Activated CD8-positive, alpha-beta memory T cell treated with anti-CD3 and anti-CD28 coated beads, Interleukin-2, amount 10 ng/mL, durations not matched to agents 7 days and 5 days (primary cell): ENCODE measurements at regions of chr11 and their contacts with region 1.

Region 1: GRCh38 chr11:32176223-32176934 is 85.5 kb downstream of the RCN1 start:
- DNase-seq: peak; percentile 84
- ATAC-seq: peak; percentile 68
- H3K4me3 Mint-ChIP-seq: no peak overlapping the region
- H3K27ac Mint-ChIP-seq: no peak overlapping the region
- H3K4me1 Mint-ChIP-seq: no peaks in the 10 kb centered on the region
- H3K27me3 Mint-ChIP-seq: peaks cover 19% of the 10 kb centered on the region

Region 2: GRCh38 chr11:32052218-32052617 is 124.2 kb before region 1 on chr11:
- CTCF ChIA-PET with region 1: interaction called, 105 read pairs
- DNase-seq: peak; percentile 61
- ATAC-seq: no peak
- H3K4me3 Mint-ChIP-seq: no peak overlapping the region
- H3K27ac Mint-ChIP-seq: no peak overlapping the region
- H3K4me1 Mint-ChIP-seq: no peaks in the 10 kb centered on the region
- H3K27me3 Mint-ChIP-seq: peaks cover 56% of the 10 kb centered on the region

Region 3: DNA sequence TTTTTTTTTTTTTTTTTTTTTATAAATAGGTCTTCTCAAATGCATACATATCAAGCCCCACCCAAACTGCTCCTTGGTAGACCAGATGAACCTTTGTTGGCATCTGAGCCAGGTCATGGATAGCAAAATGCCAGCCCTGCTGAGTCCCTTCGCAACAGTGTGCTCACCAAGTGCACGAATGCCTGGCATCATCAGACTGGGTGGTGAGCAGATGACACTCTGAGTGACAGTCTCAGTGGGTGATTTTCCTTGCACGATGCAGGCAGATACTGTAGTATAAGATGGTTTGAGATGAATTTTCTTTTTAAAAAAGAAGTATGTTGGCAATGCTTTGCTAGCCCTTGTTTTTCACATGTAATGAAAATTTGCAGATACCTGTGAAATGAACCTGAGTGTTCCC is 11.5 kb before region 1 on chr11:
- CTCF ChIA-PET with region 1: interaction called, 22 read pairs
- DNase-seq: no peak
- ATAC-seq: no peak
- H3K4me3 Mint-ChIP-seq: no peak overlapping the region
- H3K27ac Mint-ChIP-seq: no peak overlapping the region
- H3K4me1 Mint-ChIP-seq: no peaks in the 10 kb centered on the region
- H3K27me3 Mint-ChIP-seq: peaks cover 37% of the 10 kb centered on the region